HEK293T (cell line): ENCODE measurements at regions of chr4 and their contacts with region 1.

Region 1: DNA sequence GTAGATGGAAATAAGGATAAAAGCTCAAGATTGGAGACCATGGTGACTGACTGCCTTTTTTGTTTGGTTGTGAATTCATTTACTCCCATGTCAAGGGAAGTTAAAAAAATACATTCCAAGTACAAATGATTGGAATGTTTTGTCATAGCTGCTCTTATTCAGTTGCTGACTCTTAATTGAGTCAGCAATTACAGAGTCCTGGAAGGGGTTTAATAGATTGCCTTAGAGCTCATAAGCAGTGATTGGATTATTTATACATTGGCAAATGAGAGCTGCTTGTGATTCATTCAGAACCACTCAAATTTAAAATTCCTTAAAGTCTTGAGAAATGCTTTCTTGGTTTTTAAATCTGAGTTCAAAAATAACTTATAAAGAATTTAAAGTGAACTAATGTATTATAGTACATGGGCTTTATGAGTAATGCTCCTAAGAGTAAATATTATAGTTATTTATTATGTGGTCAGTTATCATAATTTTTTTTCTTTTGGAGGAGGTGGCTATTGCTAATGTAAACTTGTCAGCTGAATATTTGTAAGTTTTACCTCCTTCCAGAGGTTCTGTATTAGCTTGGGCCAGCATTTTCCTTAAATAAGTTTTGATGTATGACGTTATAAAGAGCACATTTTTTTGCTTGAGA is 13.6 kb downstream of the JADE1 start:
- DNase-seq: no peak

Region 2: GRCh38 chr4:128811571-128812441 is 11.3 kb before region 1 on chr4:
- CTCF ChIA-PET with region 1: no interaction called
- POLR2A ChIA-PET with region 1: interaction called, 20 read pairs
- DNase-seq: peak; percentile 67